ENCODE measurements at regions of chr12 and their contacts with region 1.

Region 1: DNA sequence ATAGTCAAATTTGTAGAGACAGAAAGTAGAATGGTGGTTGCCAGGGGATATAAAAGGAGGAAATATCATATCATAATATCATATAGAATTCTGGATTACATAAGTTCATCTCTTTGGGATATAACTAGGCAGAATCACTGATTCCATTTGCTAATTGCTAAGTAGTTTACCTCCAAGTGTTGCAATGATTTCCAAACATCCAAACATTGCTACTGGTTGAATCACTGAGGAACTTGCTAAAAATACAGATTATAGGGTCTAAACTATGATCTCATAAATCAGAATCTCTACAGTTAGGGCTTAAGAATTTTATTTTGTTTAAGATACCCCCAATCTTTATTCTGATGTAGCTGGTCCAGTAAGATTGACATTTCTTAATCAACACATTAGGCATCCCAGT is 16.1 kb upstream of the TAS2R42 start:
- DNase-seq: no peak
- H3K4me3 ChIP-seq: no peak overlapping the region
- H3K4me3 Mint-ChIP-seq: no peak overlapping the region
- H3K27ac Mint-ChIP-seq: no peak overlapping the region
- H3K4me1 ChIP-seq: no peaks in the 10 kb centered on the region
- H3K4me1 Mint-ChIP-seq: no peaks in the 10 kb centered on the region
- H3K27me3 ChIP-seq: no peaks in the 10 kb centered on the region
- H3K27me3 Mint-ChIP-seq: peaks cover 2% of the 10 kb centered on the region
- CTCF ChIP-seq: no peak

Region 2: GRCh38 chr12:10959804-10960203 is 243.0 kb before region 1 on chr12:
- CTCF ChIA-PET with region 1: no interaction called
- POLR2A ChIA-PET with region 1: no interaction called
- intact Hi-C with region 1: loop called (anchors 1 kb)
- DNase-seq: peak in 1 of 2 experiments; percentile 29
- H3K4me3 ChIP-seq: no peak overlapping the region
- H3K4me3 Mint-ChIP-seq: no peak overlapping the region
- H3K27ac Mint-ChIP-seq: no peak overlapping the region
- H3K4me1 ChIP-seq: peaks cover 5% of the 10 kb centered on the region
- H3K4me1 Mint-ChIP-seq: peaks cover 7% of the 10 kb centered on the region
- H3K27me3 ChIP-seq: no peaks in the 10 kb centered on the region
- H3K27me3 Mint-ChIP-seq: no peaks in the 10 kb centered on the region
- CTCF ChIP-seq: no peak

Region 3: GRCh38 chr12:11085419-11085818 is 117.4 kb before region 1 on chr12:
- CTCF ChIA-PET with region 1: no interaction called
- POLR2A ChIA-PET with region 1: no interaction called
- intact Hi-C with region 1: no loop called
- DNase-seq: no peak
- H3K4me3 ChIP-seq: no peak overlapping the region
- H3K4me3 Mint-ChIP-seq: no peak overlapping the region
- H3K27ac Mint-ChIP-seq: no peak overlapping the region
- H3K4me1 ChIP-seq: no peaks in the 10 kb centered on the region
- H3K4me1 Mint-ChIP-seq: no peaks in the 10 kb centered on the region
- H3K27me3 ChIP-seq: no peaks in the 10 kb centered on the region
- H3K27me3 Mint-ChIP-seq: no peaks in the 10 kb centered on the region
- CTCF ChIP-seq: no peak

Region 4: DNA sequence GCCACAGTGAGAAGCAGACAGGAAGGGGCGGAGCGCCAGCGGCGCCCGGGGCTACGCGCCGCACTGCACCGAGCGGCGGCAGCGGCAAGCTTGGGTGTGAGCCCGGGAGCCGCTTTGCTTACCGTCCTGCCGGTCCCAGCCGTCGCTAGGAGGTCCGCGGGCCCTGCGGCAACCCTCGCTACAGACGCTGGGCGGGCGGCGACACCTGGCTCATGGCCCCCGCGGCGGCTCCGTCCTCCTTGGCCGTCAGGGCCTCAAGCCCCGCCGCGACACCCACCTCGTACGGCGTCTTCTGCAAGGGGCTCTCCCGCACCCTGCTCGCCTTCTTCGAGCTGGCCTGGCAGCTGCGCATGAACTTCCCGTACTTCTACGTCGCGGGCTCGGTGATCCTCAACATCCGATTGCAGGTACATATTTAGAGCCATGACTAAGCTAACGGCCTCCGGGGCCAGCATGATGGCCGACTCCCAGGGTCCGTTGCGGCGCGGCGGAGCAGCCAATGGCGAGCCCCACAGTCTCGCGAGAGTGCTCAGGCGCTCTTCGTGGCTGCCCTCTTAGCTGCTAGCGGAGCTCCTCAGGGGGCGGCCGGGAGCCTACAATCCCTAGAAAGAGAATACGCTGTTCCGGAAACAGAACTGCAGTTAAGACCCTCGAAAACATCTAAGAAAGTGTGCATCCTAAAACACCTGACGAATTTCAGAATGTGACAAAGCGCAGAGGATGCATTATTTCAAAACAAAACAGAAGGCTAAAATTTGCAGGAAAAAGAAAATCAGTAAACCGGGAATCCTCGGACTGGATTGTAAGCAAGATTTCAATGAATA is 31.5 kb before region 1 on chr12 and contains the start of gene SMIM10L1:
- CTCF ChIA-PET with region 1: interaction called, 10 read pairs
- POLR2A ChIA-PET with region 1: interaction called, 3 read pairs
- intact Hi-C with region 1: no loop called
- DNase-seq: peak; percentile 96 to 97
- H3K4me3 ChIP-seq: peak within 1 kb of the TSS; percentile 98
- H3K4me3 Mint-ChIP-seq: peak within 1 kb of the TSS; percentile 99
- H3K27ac Mint-ChIP-seq: peak within 1 kb of the TSS; percentile 100
- H3K4me1 ChIP-seq: peaks cover 8% of the 10 kb centered on the region; the same call in 1 of the 2 replicates
- H3K4me1 Mint-ChIP-seq: peaks cover 28% of the 10 kb centered on the region
- H3K27me3 ChIP-seq: no peaks in the 10 kb centered on the region
- H3K27me3 Mint-ChIP-seq: no peaks in the 10 kb centered on the region
- CTCF ChIP-seq: peak in 1 of 2 experiments; percentile 8
- total RNA-seq, gene SMIM10L1: 22.4 and 24.9 TPM in 2 replicates

Region 5: DNA sequence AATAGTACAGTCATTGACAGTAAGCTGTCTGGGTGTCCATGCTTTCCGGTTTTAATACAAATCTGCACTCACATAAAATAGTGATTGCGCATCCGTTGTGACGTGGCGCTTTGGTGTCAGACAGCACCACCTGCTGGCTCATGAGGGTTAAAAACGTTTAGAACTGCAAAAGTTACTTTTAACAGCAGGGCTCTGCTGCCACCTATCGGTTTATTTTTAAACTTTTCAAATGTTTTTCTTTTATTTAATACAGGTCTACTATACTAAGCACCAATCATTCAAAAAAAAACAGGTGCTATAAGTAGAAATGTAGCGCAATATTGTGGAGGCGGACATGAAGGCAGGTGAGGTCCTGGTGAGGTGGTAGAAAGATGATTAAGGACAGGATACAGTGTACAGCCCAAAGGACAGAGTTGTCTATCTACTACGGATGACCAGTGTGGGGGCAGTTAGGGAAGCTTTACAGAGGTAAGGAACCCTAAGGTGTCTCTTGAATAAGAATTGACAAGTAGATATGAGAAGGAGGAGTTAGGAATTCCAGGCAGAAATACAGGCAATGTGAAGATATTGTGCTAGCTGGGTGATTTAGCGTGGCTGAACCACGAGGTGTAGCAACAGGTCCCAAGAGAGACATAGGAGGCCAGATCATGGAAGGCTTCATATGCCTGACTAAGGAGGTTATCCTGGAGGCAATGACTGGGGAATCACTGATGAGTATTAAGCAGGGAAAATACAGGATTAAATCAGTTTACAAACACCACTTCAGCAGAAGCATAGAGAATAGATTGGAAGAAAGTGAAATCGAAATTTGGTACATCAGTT is 284.0 kb after region 1 on chr12:
- CTCF ChIA-PET with region 1: no interaction called
- POLR2A ChIA-PET with region 1: no interaction called
- intact Hi-C with region 1: loop called (anchors 1 kb)
- DNase-seq: peak; percentile 83 to 85
- H3K4me3 ChIP-seq: no peak overlapping the region
- H3K4me3 Mint-ChIP-seq: no peak overlapping the region
- H3K27ac Mint-ChIP-seq: no peak overlapping the region
- H3K4me1 ChIP-seq: no peaks in the 10 kb centered on the region
- H3K4me1 Mint-ChIP-seq: no peaks in the 10 kb centered on the region
- H3K27me3 ChIP-seq: no peaks in the 10 kb centered on the region; the same call in 1 of the 2 replicates
- H3K27me3 Mint-ChIP-seq: peaks cover 11% of the 10 kb centered on the region
- CTCF ChIP-seq: peak; percentile 96 to 100